Activated naive CD4-positive, alpha-beta T cell treated with anti-CD3 and anti-CD28 coated beads for 36 hours (primary cell): ENCODE measurements at regions of chr5 and their contacts with region 1.

Region 1: DNA sequence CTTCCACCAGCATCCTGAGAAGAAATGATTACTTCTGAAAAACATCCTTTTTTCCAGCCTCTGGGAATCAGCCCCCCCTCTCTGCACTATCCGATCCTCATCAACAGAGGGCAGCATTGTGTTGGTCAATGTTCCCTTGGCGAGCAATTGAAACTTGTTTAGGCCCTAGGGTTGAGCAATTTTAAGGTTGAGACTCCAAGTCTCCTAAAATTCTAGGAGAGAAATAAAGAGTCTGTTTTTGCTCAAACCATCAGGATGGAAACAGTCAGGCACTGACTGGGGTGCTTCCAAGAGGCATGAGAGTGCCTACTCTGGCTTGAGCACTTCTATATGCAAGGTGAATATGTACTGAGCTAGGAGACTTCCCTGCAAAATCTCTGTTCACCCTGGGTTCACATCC is 12.4 kb upstream of the CYFIP2 start:
- DNase-seq: no peak
- H3K4me3 Mint-ChIP-seq: no peak overlapping the region
- H3K27ac Mint-ChIP-seq: peak overlapping the region; percentile 97
- H3K4me1 Mint-ChIP-seq: peaks cover 91% of the 10 kb centered on the region
- H3K27me3 Mint-ChIP-seq: no peaks in the 10 kb centered on the region

Region 2: DNA sequence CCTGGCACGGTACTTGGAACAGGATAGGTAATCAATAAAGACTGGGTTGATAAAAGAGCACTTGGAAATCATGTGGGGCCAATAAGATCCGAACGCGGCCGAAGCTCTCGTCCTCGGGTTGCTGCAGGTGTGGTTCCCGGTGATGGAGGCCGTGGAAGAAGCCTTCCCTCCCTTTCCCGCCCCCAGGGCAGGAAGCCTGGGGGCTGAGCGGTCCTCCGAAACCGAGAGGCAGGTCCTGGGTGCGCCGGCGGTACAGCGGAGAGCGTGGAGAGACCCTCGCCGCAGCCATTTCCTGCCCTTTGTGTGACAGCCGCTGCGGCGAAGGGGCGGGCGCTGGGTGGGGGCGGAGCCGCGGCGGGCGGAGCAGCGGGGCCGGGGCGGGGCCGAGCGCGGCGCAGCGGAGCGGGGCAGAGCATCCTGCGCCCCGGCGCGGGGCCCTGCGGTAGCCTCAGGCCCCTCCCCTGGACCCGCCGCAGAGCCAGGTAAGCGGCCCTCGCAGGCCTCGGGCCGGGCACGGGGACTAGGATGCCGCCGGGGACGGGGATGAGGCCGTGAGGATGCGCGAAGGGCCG is 12.3 kb after region 1 on chr5 and contains the start of gene CYFIP2:
- CTCF ChIA-PET with region 1: interaction called, 18 read pairs
- intact Hi-C with region 1: loop called (anchors 2 kb)
- DNase-seq: peak; percentile 87
- H3K4me3 Mint-ChIP-seq: peak within 1 kb of the TSS; percentile 94
- H3K27ac Mint-ChIP-seq: peak within 1 kb of the TSS; percentile 94
- H3K4me1 Mint-ChIP-seq: peaks cover 65% of the 10 kb centered on the region
- H3K27me3 Mint-ChIP-seq: no peaks in the 10 kb centered on the region
- total RNA-seq, gene CYFIP2: 490 to 492 TPM

Region 3: DNA sequence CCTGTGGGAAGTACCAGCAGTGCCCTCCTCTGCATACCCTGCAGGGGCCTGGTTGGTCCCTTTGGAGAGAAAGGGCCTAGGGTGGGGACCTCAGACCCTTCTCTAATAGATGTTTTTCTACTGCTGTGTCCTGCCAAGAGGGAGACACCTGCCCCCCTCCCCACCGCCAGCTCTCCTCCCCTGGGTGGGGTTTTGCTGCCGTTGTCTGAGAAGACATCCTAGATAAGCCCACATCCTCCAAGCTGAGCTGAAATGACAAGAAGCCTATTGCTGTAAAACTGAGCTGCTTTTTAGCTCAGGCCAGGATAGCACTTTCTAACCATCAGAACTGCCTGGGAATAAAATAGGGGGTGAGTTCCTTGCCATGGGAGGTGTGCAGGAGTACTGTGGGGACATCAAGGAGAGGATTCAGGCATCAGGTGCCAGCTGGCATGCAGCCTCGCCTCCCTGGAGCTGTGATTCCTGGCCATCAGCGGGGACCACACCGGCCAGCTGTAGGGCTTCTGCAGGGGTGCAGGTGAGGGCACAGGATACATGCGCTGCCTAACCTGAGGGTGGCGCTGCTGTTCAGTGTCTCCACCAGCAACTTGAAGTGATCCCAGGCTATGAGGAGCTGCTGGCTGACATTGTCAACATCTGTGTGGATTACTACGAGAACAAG is 50.2 kb after region 1 on chr5:
- CTCF ChIA-PET with region 1: interaction called, 13 read pairs
- intact Hi-C with region 1: no loop called
- DNase-seq: peak; percentile 82
- H3K4me3 Mint-ChIP-seq: no peak overlapping the region
- H3K27ac Mint-ChIP-seq: peak overlapping the region; percentile 81
- H3K4me1 Mint-ChIP-seq: peaks cover 72% of the 10 kb centered on the region
- H3K27me3 Mint-ChIP-seq: no peaks in the 10 kb centered on the region

Region 4: DNA sequence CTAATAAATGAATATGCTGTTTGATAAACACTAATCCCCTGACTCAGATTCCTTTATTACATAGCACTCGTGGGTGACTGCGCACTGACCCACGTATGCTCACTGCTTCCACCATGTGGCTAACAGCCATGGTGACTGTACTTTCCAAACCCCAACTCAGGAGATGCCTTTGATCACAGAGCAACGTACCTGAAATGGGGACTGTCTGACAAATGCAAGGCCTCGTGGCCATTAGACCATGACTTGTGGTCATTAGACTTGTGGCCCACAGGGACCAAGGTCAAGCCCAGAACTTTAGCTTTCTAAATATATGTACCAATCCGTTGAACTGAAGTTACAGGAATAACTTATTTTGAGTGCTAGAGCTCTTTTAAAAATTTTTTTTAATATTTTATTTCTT is 58.9 kb after region 1 on chr5:
- CTCF ChIA-PET with region 1: interaction called, 11 read pairs
- intact Hi-C with region 1: loop called (anchors 1 kb)
- DNase-seq: peak; percentile 82
- H3K4me3 Mint-ChIP-seq: no peak overlapping the region
- H3K27ac Mint-ChIP-seq: peak overlapping the region; percentile 90
- H3K4me1 Mint-ChIP-seq: peaks cover 41% of the 10 kb centered on the region
- H3K27me3 Mint-ChIP-seq: no peaks in the 10 kb centered on the region

Region 5: GRCh38 chr5:157558041-157558595 is 304.6 kb after region 1 on chr5:
- CTCF ChIA-PET with region 1: no interaction called
- intact Hi-C with region 1: no loop called
- DNase-seq: no peak
- H3K4me3 Mint-ChIP-seq: no peak overlapping the region
- H3K27ac Mint-ChIP-seq: no peak overlapping the region
- H3K4me1 Mint-ChIP-seq: no peaks in the 10 kb centered on the region
- H3K27me3 Mint-ChIP-seq: no peaks in the 10 kb centered on the region

Region 6: GRCh38 chr5:157842787-157843186 is 589.2 kb after region 1 on chr5:
- CTCF ChIA-PET with region 1: no interaction called
- intact Hi-C with region 1: no loop called
- DNase-seq: no peak
- H3K4me3 Mint-ChIP-seq: no peak overlapping the region
- H3K27ac Mint-ChIP-seq: no peak overlapping the region
- H3K4me1 Mint-ChIP-seq: peaks cover 14% of the 10 kb centered on the region
- H3K27me3 Mint-ChIP-seq: no peaks in the 10 kb centered on the region